Ovary (tissue), 10 donors: ENCODE measurements at regions of chr10 and their contacts with region 1.

Region 1: GRCh38 chr10:30783939-30784500 is 154.5 kb upstream of the LYZL2 start:
- DNase-seq: peak; percentile 87 to 93 (median 91)
- H3K4me3 ChIP-seq: peak overlapping the region; percentile 42
- H3K27ac ChIP-seq: peak overlapping the region; percentile 89 to 95
- H3K4me1 ChIP-seq: no peaks in the 10 kb centered on the region
- H3K27me3 ChIP-seq: no peaks in the 10 kb centered on the region
- CTCF ChIP-seq: peak; percentile 72 to 93 (median 88)
- EP300 ChIP-seq: no peak
- POLR2A ChIP-seq: no peak

Region 2: DNA sequence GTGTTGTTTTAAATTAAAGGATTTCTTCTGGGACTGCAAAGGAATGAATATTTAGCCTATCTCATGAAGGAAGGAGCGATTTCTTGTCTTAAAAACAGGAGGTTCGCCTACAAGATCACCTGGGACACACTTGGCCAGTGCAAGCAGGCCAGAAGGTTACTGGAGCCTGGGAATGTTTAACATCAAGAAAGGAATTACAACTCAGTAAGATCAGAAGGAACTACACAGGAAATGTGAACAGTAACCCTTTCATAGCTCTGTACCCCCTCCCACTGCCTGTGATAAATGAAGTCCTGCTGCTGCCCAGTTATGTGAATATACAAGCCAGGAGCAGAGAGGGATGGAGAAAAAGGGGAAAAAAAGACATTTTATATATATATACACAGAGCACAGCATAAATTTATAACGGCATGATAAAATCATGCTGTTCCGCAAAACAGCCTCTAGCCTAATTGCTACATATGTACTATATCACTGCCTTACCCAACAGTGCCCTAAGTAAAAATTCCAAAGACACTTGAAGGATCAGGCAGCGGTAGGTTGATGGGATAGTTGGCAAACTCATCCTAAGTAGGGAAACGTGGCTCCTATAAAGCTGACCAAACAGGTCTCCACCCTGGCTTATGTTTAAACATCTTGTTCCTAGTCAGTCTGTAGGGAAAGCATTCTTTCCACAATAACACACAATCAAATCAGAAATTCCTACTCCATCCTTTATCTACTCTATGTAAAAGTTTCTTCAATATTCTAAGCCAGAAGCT is 183.8 kb after region 1 on chr10:
- intact Hi-C with region 1: no loop called
- DNase-seq: no peak
- H3K4me3 ChIP-seq: no peak overlapping the region
- H3K27ac ChIP-seq: no peak overlapping the region
- H3K4me1 ChIP-seq: peaks cover 4% of the 10 kb centered on the region
- H3K27me3 ChIP-seq: no peaks in the 10 kb centered on the region
- CTCF ChIP-seq: no peak
- EP300 ChIP-seq: no peak
- POLR2A ChIP-seq: no peak

Region 3: GRCh38 chr10:30980951-30981616 is 197.1 kb after region 1 on chr10:
- intact Hi-C with region 1: no loop called
- DNase-seq: peak in 1 of 5 donors; percentile 27
- H3K4me3 ChIP-seq: no peak overlapping the region
- H3K27ac ChIP-seq: no peak overlapping the region
- H3K4me1 ChIP-seq: peaks cover 4% of the 10 kb centered on the region
- H3K27me3 ChIP-seq: no peaks in the 10 kb centered on the region
- CTCF ChIP-seq: no peak
- EP300 ChIP-seq: no peak
- POLR2A ChIP-seq: no peak

Region 4: GRCh38 chr10:31031558-31032257 is 247.7 kb after region 1 on chr10 and contains the start of gene ZNF438:
- intact Hi-C with region 1: loop called in 1 of 4 experiments (anchors 5 kb)
- DNase-seq: peak; percentile 94 to 99 (median 97)
- H3K4me3 ChIP-seq: peak within 1 kb of the TSS; percentile 83
- H3K27ac ChIP-seq: peak within 1 kb of the TSS; percentile 93 to 100
- H3K4me1 ChIP-seq: peaks cover 6% of the 10 kb centered on the region
- H3K27me3 ChIP-seq: no peaks in the 10 kb centered on the region
- CTCF ChIP-seq: peak in 2 of 3 donors; percentile 62 to 64
- EP300 ChIP-seq: peak; percentile 43
- POLR2A ChIP-seq: peak; percentile 84
- total RNA-seq, gene ZNF438: 6.2 to 11.6 (median 6.9) TPM

Region 5: GRCh38 chr10:31133628-31134302 is 349.7 kb after region 1 on chr10:
- intact Hi-C with region 1: loop called in 1 of 4 experiments (anchors 10 kb)
- DNase-seq: peak; percentile 85 to 92 (median 89)
- H3K4me3 ChIP-seq: peak overlapping the region; percentile 45
- H3K27ac ChIP-seq: peak overlapping the region; percentile 73 to 81
- H3K4me1 ChIP-seq: peaks cover 5% of the 10 kb centered on the region
- H3K27me3 ChIP-seq: no peaks in the 10 kb centered on the region
- CTCF ChIP-seq: no peak
- EP300 ChIP-seq: no peak
- POLR2A ChIP-seq: peak; percentile 55

Region 6: DNA sequence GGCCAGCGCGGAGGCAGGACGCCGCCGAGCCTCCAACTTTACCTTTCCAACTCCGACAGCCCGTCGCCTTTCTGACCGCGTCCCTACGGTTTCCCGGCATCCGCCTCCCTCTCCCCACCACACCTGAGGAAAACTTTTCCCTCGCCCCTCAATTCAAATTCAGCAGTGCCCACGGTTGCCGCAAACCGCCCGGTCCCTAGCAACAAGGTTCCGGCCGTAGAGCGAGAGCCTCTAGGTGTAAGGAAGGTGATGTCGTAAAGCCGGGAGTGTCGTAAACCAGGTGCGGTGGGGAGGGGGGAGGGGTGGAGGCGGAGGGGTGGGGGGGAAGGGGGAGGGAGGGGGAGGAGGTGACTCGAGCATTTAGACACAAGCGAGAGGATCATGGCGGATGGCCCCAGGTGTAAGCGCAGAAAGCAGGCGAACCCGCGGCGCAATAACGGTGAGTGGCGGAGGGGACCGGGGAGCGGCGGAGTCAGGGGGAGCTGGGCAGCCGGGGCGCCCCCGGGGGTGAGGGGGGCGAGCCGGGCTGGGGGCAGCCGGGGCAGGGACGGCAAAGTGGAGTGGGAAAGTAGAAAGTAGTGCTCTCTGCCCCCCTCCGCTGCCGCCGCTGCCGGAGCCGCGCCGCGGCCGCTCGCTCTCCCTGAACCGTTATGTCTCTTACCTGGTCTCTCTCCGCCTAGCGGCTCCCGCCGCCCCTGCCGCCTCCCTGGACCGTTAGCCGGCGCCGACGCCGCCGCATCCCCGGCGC is 535.0 kb after region 1 on chr10 and contains the start of gene ZEB1:
- intact Hi-C with region 1: loop called (anchors 5 to 10 kb)
- DNase-seq: peak; percentile 87 to 95 (median 92)
- H3K4me3 ChIP-seq: peak within 1 kb of the TSS; percentile 95
- H3K27ac ChIP-seq: peak within 1 kb of the TSS; percentile 89 to 94
- H3K4me1 ChIP-seq: no peaks in the 10 kb centered on the region
- H3K27me3 ChIP-seq: no peaks in the 10 kb centered on the region
- CTCF ChIP-seq: peak; percentile 30 to 69 (median 58)
- EP300 ChIP-seq: no peak
- POLR2A ChIP-seq: peak; percentile 40
- total RNA-seq, gene ZEB1: 23.3 to 48.4 (median 40.7) TPM

Region 7: GRCh38 chr10:31603235-31604087 is 819.4 kb after region 1 on chr10:
- intact Hi-C with region 1: loop called in 1 of 4 experiments (anchors 2 kb)
- DNase-seq: peak; percentile 96 to 98 (median 97)
- H3K4me3 ChIP-seq: peak overlapping the region; percentile 53
- H3K27ac ChIP-seq: peak overlapping the region; percentile 26 to 79
- H3K4me1 ChIP-seq: peaks cover 6% of the 10 kb centered on the region
- H3K27me3 ChIP-seq: no peaks in the 10 kb centered on the region
- CTCF ChIP-seq: peak in 2 of 3 donors; percentile 45 to 54
- EP300 ChIP-seq: no peak
- POLR2A ChIP-seq: peak; percentile 54

Region 8: DNA sequence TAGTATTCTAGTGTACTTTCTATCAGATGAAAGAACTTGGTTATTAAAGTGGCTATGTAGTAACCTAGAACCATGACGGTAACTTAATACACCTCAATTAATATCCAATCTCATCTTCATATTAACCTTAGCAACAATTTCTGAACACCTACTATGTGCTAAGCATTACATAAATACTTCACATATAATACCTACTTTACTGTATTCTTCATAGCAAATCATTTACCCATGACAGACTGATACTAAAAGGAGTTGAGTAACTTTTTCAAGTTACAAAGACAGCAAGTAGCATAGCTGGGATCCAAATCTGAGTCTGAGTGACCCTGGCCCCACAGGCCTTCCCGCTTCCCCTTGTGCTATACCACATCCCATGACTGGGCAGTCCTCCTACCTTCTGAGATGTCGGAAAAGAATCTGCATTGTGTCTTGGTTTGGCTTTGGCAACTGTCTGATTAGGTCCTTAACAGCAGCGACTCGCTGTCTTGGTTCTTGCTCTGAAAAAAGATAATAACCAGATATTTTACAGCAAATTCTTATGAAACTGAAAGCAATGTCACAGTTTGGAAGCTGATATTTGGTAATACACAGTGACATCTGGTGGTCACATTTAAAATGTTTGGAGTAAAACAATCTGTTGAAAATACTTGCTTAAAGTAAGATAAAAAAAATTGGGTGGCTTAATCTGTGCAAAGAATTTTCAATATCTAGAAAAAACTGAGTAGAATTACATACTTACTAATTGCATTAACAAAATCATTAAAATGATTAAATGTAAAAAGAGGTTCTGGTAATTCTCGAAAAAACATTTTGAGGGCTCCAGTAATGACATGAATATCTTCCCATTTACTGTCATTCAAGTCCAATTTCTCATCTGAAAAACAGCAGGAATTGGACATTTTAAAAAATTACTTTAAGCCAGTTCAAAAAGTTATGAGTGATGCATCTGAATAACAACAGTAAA is 1024.5 kb after region 1 on chr10:
- intact Hi-C with region 1: loop called in 2 of 4 experiments (anchors 10 kb)
- DNase-seq: peak in 4 of 5 donors; percentile 15 to 29 (median 18)
- H3K4me3 ChIP-seq: peak overlapping the region; percentile 15
- H3K27ac ChIP-seq: peak overlapping the region in 1 of 2 donors; percentile 53
- H3K4me1 ChIP-seq: peaks cover 2% of the 10 kb centered on the region
- H3K27me3 ChIP-seq: no peaks in the 10 kb centered on the region
- CTCF ChIP-seq: peak; percentile 41 to 71 (median 61)
- EP300 ChIP-seq: no peak
- POLR2A ChIP-seq: no peak

Region 9: DNA sequence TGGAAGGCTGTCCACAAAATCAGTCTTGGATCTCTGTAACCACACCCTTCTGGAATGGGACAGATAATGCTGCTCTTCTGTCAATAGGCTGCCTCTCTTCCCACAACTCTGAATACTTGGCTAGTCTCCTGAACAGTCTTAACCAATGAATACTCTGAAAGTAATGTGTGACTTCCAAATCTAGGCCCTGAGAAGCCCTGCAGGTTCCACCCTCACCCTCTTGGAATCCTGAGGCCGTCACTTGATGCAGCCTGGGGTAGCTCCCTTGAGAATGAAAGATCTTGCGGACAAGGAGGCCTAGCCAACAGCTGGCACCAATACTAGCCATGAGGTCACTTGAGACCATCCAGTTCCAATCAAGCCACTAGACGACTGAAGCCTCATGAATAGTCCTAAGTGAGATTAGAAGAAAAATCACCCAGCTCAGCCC is 1035.4 kb after region 1 on chr10:
- intact Hi-C with region 1: loop called in 1 of 4 experiments (anchors 10 kb)
- DNase-seq: peak in 1 of 5 donors; percentile 17
- H3K4me3 ChIP-seq: no peak overlapping the region
- H3K27ac ChIP-seq: no peak overlapping the region
- H3K4me1 ChIP-seq: no peaks in the 10 kb centered on the region
- H3K27me3 ChIP-seq: no peaks in the 10 kb centered on the region
- CTCF ChIP-seq: no peak
- EP300 ChIP-seq: no peak
- POLR2A ChIP-seq: no peak